MCF 10A (cell line): ENCODE measurements at regions of chr10 and their contacts with region 1.

Region 1: GRCh38 chr10:87659571-87660483 is at the start of gene PAPSS2:
- DNase-seq: peak; percentile 36
- H3K4me3 Mint-ChIP-seq: peak within 1 kb of the TSS; percentile 71
- H3K27ac Mint-ChIP-seq: peak within 1 kb of the TSS; percentile 39
- H3K4me1 Mint-ChIP-seq: peaks cover 4% of the 10 kb centered on the region
- H3K27me3 Mint-ChIP-seq: peaks cover 8% of the 10 kb centered on the region
- CTCF ChIP-seq: no peak
- total RNA-seq, gene PAPSS2: 1.0 and 1.4 TPM in 2 replicates

Region 2: DNA sequence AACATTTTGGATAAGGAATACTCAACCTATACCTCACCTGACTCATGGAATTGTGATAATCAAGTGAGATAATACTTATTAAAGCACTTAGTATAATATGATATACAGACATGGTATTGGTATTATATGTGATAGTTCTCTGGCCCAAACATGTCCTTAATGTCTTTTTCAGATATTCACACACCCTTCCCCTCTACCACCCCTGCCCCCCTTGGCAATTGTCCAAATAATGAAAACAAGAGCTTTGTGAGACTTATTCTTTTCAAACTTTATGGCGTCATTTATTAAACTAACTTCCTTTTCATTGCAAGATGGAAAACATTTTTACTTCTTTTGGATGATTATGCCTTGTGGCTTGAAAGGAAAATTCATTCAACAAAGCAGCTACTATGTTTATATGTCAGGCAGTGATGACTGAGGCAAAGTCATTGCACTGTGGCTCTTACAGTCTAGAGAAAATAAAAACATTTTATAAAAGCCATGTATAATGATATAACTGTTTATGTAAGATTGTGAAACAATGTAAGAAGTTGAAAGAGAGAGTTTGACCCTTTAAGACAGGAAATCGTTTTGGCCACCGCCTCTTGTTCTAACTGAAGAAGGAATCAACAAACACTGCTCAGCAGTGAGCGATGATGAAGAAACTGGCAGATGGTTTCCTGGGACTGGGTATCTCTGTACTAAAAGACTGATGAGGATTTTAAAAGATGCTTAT is 127.8 kb before region 1 on chr10:
- CTCF ChIA-PET with region 1: interaction called, 4 read pairs
- POLR2A ChIA-PET with region 1: no interaction called
- intact Hi-C with region 1: loop called (anchors 1 kb)
- DNase-seq: peak; percentile 53
- H3K4me3 Mint-ChIP-seq: no peak overlapping the region
- H3K27ac Mint-ChIP-seq: no peak overlapping the region
- H3K4me1 Mint-ChIP-seq: no peaks in the 10 kb centered on the region
- H3K27me3 Mint-ChIP-seq: no peaks in the 10 kb centered on the region
- CTCF ChIP-seq: no peak

Region 3: DNA sequence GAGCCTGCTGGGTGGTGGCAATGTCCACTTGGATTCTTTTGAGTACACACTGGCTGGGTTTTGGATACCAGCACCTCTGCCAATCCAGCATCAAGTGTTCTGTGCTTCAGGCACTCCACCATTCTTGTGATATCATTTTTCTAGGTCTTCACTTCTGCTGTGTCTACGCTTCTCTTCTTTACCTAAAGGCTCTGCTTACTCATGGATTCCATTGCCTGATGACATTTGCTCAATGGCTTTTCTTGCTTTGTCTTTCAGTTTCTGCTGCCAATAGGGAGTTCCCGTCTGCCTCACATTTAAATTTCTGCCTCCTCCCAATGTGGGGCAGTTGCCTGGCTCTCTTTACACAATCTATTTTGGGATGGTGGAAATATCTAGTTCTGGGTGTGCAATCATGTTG is 12.9 kb before region 1 on chr10:
- CTCF ChIA-PET with region 1: interaction called, 17 read pairs
- POLR2A ChIA-PET with region 1: interaction called, 4 read pairs
- intact Hi-C with region 1: no loop called
- DNase-seq: no peak
- H3K4me3 Mint-ChIP-seq: no peak overlapping the region
- H3K27ac Mint-ChIP-seq: no peak overlapping the region
- H3K4me1 Mint-ChIP-seq: no peaks in the 10 kb centered on the region
- H3K27me3 Mint-ChIP-seq: no peaks in the 10 kb centered on the region
- CTCF ChIP-seq: no peak

Region 4: GRCh38 chr10:87712913-87713616 is 53.2 kb after region 1 on chr10:
- CTCF ChIA-PET with region 1: no interaction called
- POLR2A ChIA-PET with region 1: no interaction called
- intact Hi-C with region 1: no loop called
- DNase-seq: no peak
- H3K4me3 Mint-ChIP-seq: no peak overlapping the region
- H3K27ac Mint-ChIP-seq: no peak overlapping the region
- H3K4me1 Mint-ChIP-seq: no peaks in the 10 kb centered on the region
- H3K27me3 Mint-ChIP-seq: no peaks in the 10 kb centered on the region
- CTCF ChIP-seq: no peak

Region 5: DNA sequence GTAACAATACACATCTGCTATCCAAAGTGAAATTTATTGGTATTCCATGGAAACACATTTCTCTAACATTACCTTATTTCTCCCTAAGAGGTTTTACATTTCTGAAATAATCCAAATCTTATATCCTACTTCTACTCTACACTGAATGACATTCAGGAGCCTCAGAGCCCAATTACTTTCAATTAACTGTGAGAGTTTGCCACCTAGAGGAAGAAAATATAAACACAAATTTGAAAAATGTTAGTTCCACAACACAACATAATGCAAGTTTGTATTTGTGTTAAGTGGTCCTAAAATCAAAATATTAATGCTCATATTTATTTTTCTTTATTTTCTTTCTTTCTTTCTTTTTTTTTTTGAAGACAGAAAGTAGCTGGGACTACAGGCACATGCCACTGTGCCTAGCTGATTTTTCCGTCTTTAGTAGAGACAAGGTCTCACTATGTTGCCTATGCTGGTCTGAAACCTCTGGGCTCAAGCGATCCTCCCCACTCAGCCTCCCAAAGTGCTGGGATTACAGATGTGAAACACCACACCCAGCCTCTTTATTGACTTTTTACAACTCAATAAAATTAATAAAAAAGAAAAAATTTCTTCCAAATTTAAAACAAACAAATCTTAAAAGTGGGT is 112.2 kb after region 1 on chr10:
- CTCF ChIA-PET with region 1: interaction called, 8 read pairs
- POLR2A ChIA-PET with region 1: interaction called, 3 read pairs
- intact Hi-C with region 1: loop called (anchors 1 kb)
- DNase-seq: peak; percentile 39
- H3K4me3 Mint-ChIP-seq: no peak overlapping the region
- H3K27ac Mint-ChIP-seq: no peak overlapping the region
- H3K4me1 Mint-ChIP-seq: peaks cover 11% of the 10 kb centered on the region
- H3K27me3 Mint-ChIP-seq: no peaks in the 10 kb centered on the region
- CTCF ChIP-seq: peak; percentile 33